Activated CD4-positive, alpha-beta T cell treated with anti-CD3 and anti-CD28 coated beads, Interleukin-2, amount 10 ng/mL, durations not matched to agents 24 days and 14 days (primary cell): ENCODE measurements at regions of chr1 and their contacts with region 1.

Region 1: DNA sequence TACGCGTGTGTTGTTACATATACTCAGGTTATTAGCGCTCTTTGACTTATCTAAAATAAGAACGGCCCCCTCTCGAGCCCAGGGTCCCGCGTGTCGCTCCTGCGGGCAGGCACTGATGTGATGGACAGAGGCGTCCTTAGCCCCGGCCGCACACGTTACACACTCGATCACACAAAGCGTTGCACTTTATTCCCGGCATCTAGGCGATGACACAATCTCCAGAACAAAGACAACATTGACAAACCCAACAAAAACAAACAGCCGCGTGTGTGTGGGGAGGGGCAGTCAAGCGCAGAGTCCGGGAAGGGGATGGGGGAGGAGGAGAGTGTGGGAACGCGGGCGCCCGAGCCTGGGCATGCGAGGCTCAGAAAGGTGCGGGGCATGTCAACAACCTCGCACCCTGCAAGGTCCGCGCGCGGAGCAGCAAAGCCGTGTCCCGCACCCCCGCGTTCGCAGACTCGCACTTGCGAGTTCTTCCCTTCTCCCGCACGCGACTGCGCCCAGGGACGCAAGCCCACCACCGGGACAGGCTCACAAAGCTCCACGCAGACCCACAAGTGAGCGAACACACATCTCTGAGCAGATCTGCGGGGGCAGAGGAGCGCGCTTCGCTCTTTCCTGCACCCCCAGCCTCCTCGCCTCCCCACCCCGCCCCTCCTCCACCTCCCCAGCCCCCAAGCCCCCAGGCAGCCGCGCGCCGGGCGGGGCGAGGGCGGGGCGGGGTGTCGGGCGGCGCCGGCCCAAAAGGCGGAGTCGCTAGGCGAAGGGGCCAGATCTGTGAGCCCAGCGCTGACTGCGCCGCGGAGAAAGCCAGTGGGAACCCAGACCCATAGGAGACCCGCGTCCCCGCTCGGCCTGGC is at the start of gene EFNA1:
- DNase-seq: peak; percentile 87
- H3K4me3 Mint-ChIP-seq: peak within 1 kb of the TSS; percentile 84
- H3K27ac Mint-ChIP-seq: no peak within 1 kb of the TSS
- H3K4me1 Mint-ChIP-seq: peaks cover 27% of the 10 kb centered on the region
- H3K27me3 Mint-ChIP-seq: peaks cover 56% of the 10 kb centered on the region
- total RNA-seq, gene EFNA1: 0.24 TPM in 1 of 2 replicates, not detected in the other

Region 2: DNA sequence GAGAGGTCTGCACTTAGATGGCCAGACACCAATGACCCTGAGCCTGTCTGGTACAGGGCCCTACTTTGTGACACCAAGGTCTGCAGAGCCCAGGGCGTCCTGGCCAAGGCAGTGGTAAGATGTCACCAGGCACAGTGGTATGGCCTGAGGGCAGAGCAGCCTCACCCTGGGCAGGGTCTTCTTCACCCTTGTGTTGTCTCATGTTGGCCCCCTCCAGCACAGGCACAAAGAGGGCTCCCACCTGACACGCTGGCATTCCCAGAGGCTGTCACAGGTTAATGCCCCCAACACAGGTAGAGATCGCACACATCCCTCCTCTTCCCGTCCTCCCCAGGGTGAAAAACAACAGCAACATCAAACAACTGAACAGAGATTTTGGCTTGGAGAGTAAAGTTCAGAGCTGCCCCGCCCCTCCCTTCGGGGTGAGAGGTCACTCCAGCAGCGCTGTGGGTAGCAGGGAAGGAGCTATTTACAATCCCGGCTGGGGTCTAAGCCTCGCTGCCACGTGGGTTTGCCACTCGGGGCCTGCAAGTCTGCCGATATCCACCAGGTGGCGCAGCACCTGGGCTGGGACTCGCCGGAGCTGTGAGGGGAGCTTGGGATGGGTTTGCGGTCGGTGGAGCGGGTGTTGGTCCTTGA is 36.1 kb before region 1 on chr1:
- intact Hi-C with region 1: loop called (anchors 2 kb)
- DNase-seq: peak; percentile 95
- H3K4me3 Mint-ChIP-seq: no peak overlapping the region
- H3K27ac Mint-ChIP-seq: peak overlapping the region; percentile 5
- H3K4me1 Mint-ChIP-seq: peaks cover 7% of the 10 kb centered on the region
- H3K27me3 Mint-ChIP-seq: peaks cover 23% of the 10 kb centered on the region

Region 3: DNA sequence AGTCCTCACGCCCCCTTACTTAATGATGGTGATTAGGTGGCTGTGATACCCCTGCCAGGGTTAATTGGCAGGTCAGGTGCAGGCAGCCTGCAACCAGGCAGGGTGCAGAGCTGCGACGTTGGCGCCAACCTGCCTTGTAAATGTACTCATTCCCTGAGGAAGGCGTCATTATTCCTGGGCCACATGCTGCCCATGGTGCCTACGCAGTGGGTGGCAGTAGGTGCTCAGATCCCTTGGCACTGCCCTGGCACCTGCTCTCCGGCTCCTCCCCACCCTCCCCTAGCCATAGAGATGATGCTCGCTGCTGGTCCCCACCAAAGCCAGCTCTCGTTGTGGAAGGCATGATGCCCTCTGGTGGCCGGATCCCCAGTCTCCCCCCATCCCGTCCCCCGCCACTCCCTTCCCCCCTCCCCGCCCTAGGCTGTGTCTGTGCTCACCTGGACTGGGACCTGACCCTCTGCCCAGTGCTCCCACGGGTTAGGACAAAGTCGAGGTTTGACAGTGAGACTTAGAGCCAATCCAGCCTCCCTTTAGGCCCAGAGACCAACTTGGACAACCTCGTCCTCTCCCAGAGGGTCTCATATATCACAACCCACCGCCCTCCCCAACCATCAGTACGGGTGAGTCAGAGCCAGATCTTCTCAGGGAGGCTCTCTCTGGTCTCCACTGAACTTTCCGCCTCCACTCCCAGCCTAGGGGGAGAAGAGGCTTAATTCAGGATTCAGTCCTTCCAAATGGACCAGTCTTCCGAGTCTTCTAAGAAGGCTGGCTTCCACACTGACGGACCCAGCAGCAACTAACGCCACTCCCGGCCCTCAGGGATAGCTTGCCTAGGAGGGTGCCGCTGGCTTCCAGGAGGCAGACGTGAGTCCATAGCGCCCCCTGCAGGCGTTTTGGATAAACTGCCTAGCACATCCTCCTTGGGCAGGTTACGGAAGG is 40.1 kb after region 1 on chr1:
- intact Hi-C with region 1: loop called (anchors 5 kb)
- DNase-seq: peak; percentile 96
- H3K4me3 Mint-ChIP-seq: peak overlapping the region; percentile 68
- H3K27ac Mint-ChIP-seq: peak overlapping the region; percentile 29
- H3K4me1 Mint-ChIP-seq: peaks cover 24% of the 10 kb centered on the region
- H3K27me3 Mint-ChIP-seq: peaks cover 4% of the 10 kb centered on the region